Thyroid gland (tissue), 4 donors: ENCODE measurements at regions of chr1 and their contacts with region 1.

Region 1: GRCh38 chr1:33094971-33095604 is 14.1 kb downstream of the AZIN2 start:
- DNase-seq: peak; percentile 53 to 66
- H3K4me3 ChIP-seq: no peak overlapping the region
- H3K27ac ChIP-seq: no peak overlapping the region
- H3K4me1 ChIP-seq: no peaks in the 10 kb centered on the region
- H3K27me3 ChIP-seq: no peaks in the 10 kb centered on the region
- CTCF ChIP-seq: peak; percentile 77 to 99 (median 95)
- POLR2A ChIP-seq: no peak

Region 2: DNA sequence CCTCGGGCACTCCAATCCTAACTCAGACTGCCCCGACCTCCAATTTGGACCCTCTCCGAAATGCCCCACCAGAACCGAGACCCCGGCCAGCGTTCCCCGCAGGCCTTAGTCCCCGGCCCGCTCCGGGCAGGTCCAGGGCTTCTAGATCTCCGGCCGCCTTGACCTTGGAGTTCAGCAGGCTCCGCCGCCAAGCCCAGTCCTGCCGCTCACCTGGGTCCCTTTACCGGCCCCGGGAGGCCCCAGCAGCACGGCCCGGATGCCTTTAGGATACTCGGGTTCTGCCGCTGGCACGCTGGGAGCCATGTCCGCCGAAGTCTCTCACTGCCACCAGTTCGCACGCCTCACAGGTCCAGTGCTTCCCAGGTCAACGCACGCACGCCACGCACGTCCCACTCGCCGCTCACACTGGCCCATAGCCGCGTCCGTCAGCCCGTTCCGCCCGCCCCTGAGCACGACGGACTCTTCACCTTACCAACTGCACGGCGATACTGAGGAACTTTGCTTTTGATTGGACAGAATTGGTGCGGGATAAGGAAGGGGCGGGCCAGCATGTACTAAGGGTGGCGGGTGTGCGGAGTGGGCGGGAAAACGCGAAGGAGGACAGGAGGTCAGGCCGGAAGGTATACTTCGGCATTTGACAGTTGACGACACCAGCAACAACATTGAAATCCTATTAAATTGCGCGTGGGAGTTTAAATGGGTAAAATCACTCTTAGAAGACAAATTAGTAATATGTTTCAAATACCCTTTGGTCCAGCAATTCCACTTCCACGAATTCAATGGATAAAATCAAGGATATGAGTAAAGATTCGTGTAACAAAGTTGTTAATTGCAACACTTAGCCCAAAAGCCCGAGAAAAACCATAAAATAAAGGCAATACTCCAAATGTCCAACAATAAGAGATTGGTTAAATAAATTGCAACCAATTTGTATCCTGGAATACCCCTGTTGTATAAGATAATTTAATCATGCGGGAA is 58.3 kb before region 1 on chr1 and contains the start of gene AK2:
- intact Hi-C with region 1: no loop called
- DNase-seq: peak; percentile 97 to 98
- H3K4me3 ChIP-seq: peak within 1 kb of the TSS; percentile 9 to 89 (median 47)
- H3K27ac ChIP-seq: peak within 1 kb of the TSS; percentile 1 to 86 (median 72)
- H3K4me1 ChIP-seq: peaks cover 31 to 37% of the 10 kb centered on the region in 2 donors
- H3K27me3 ChIP-seq: no peaks in the 10 kb centered on the region
- CTCF ChIP-seq: no peak
- POLR2A ChIP-seq: peak in 1 of 2 donors; percentile 86
- total RNA-seq, gene AK2: 214 to 308 (median 256) TPM

Region 3: GRCh38 chr1:33176362-33176850 is 81.3 kb after region 1 on chr1:
- intact Hi-C with region 1: no loop called
- DNase-seq: no peak
- H3K4me3 ChIP-seq: no peak overlapping the region
- H3K27ac ChIP-seq: no peak overlapping the region
- H3K4me1 ChIP-seq: peaks cover 5 to 10% of the 10 kb centered on the region in 2 donors
- H3K27me3 ChIP-seq: no peaks in the 10 kb centered on the region
- CTCF ChIP-seq: no peak
- POLR2A ChIP-seq: no peak

Region 4: GRCh38 chr1:33616773-33617172 is 521.7 kb after region 1 on chr1:
- intact Hi-C with region 1: loop called (anchors 10 kb)
- DNase-seq: no peak
- H3K4me3 ChIP-seq: no peak overlapping the region
- H3K27ac ChIP-seq: no peak overlapping the region
- H3K4me1 ChIP-seq: no peaks in the 10 kb centered on the region
- H3K27me3 ChIP-seq: no peaks in the 10 kb centered on the region
- CTCF ChIP-seq: no peak
- POLR2A ChIP-seq: no peak